ENCODE measurements at regions of chr5 and their contacts with region 1.

Region 1: DNA sequence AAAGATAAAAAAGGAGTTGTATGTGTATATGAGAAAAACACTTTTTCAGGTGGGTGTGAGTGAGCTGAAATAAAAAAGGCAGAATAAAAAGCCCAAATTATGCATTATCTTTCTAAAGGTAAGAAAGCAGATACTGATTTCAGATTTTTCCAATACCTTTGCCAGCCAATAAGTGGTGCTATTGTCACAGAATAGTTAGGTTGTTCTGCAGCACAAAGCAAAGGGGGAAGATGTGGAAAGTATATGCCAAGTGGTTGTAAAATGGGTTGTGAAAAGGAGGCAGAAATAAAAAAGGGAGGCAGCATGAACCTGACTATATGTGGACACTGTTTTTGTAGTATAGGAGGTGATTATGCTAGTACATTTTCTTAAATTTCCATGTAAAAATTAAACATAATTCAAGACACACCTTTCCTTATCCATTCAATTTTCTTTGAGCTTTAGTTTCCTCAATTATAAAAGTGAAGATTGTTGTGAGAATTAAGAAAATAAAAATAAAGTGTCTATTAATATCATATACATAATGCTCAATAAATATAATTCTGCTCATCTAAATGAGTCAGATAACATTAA is 106.7 kb downstream of the SMIM15 start:
- DNase-seq: peak; percentile 66
- H3K4me3 ChIP-seq: no peak overlapping the region
- H3K27ac ChIP-seq: no peak overlapping the region
- H3K4me1 ChIP-seq: peaks cover 13% of the 10 kb centered on the region
- H3K27me3 ChIP-seq: no peaks in the 10 kb centered on the region
- CTCF ChIP-seq: peak; percentile 50 to 54
- POLR2A ChIP-seq: no peak

Region 2: GRCh38 chr5:60660038-60660437 is 395.5 kb before region 1 on chr5:
- CTCF ChIA-PET with region 1: no interaction called
- POLR2A ChIA-PET with region 1: no interaction called
- dilution Hi-C with region 1: no loop called
- intact Hi-C with region 1: no loop called
- DNase-seq: no peak
- H3K4me3 ChIP-seq: no peak overlapping the region
- H3K27ac ChIP-seq: no peak overlapping the region
- H3K4me1 ChIP-seq: no peaks in the 10 kb centered on the region
- H3K27me3 ChIP-seq: no peaks in the 10 kb centered on the region
- CTCF ChIP-seq: no peak
- POLR2A ChIP-seq: no peak

Region 3: DNA sequence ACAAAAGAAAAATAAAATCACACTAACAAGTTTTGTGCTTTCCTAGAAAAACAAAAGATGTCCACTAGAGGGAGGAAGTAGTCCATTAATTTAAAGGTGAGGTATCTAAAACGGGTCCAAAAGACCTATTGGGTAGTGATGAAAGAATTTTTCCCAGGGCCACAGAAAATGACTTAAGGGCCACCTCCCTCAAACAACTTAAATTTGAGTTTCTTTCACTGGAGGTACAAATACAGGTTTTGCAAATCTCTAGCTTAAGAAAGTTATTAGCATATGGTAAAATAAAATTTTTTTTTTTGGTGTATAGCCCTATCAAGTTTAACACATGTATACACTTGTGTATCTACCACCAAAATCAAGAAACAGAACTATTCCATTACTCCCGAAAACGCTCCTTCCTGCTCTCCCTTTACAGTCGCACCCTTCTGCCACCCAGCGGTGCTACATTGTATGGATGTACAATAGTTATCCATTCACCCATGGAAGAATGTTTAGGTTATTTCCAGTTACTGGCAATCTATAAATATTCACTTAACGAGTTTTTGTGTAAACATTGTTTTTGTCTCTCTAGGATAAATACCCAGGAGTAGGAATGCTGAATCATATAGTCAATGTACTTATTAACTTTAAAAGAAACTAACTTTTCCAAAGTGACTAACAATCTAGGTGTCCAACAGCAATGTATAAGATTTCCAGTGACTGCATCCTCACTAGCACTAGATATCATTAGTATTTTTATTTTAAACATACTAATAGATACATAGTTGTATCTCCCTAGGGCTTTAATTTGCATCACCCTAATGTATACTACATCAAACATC is 377.5 kb before region 1 on chr5:
- CTCF ChIA-PET with region 1: no interaction called
- POLR2A ChIA-PET with region 1: no interaction called
- dilution Hi-C with region 1: no loop called
- intact Hi-C with region 1: loop called (anchors 2 kb)
- DNase-seq: peak; percentile 70
- H3K4me3 ChIP-seq: no peak overlapping the region
- H3K27ac ChIP-seq: no peak overlapping the region
- H3K4me1 ChIP-seq: no peaks in the 10 kb centered on the region
- H3K27me3 ChIP-seq: no peaks in the 10 kb centered on the region
- CTCF ChIP-seq: peak; percentile 22
- POLR2A ChIP-seq: no peak

Region 4: GRCh38 chr5:61280205-61280604 is 224.7 kb after region 1 on chr5:
- CTCF ChIA-PET with region 1: interaction called, 4 read pairs
- POLR2A ChIA-PET with region 1: no interaction called
- dilution Hi-C with region 1: no loop called
- intact Hi-C with region 1: loop called (anchors 2 kb)
- DNase-seq: peak; percentile 89
- H3K4me3 ChIP-seq: no peak overlapping the region
- H3K27ac ChIP-seq: no peak overlapping the region
- H3K4me1 ChIP-seq: peaks cover 39% of the 10 kb centered on the region
- H3K27me3 ChIP-seq: no peaks in the 10 kb centered on the region
- CTCF ChIP-seq: no peak
- POLR2A ChIP-seq: no peak

Region 5: GRCh38 chr5:61658592-61659008 is 603.1 kb after region 1 on chr5:
- CTCF ChIA-PET with region 1: interaction called, 79 read pairs
- POLR2A ChIA-PET with region 1: no interaction called
- dilution Hi-C with region 1: no loop called
- intact Hi-C with region 1: loop called (anchors 1 kb)
- DNase-seq: peak; percentile 74
- H3K4me3 ChIP-seq: no peak overlapping the region
- H3K27ac ChIP-seq: no peak overlapping the region
- H3K4me1 ChIP-seq: no peaks in the 10 kb centered on the region
- H3K27me3 ChIP-seq: peaks cover 5 to 11% of the 10 kb centered on the region in 2 experiments
- CTCF ChIP-seq: peak; percentile 90 to 93
- POLR2A ChIP-seq: no peak

Region 6: DNA sequence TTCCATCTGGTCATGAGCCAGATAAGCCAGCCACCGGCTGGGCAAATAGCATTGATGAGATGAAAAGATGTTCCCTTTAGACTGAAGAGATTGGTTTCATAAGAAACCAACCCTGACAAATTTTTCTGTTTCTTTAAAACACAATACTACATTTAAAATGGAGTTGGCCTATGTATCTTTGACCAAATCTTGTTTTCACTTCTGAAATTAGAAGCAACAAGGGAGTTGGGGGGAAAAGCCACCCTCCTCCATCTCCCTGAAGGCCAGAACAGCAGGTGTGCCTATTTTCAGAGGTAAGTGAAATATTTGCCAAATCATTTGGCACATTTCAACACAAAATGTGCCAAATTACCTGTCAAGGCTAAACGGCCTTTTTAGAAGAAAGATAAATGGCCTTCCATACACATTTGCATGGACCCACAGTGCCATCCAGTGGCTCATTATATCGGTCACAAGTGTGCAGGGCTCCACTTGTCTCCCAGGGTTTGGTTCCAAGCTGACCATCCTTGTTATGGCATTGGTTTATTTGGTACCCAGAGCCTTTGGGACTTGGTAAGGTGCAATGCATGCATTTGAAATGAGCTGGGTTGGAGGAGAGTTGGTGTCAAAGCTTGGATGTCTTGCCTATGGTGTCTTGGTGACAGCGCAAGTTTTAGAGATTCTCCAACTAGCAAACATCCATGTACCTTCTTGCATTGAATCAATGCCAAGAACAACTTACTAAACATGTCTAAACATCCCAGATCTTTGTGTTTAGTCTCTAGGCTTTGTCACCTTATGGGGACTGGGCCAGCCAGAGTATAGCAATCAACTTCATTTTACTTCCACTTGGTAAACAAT is 878.5 kb after region 1 on chr5:
- CTCF ChIA-PET with region 1: interaction called, 6 read pairs
- POLR2A ChIA-PET with region 1: no interaction called
- dilution Hi-C with region 1: no loop called
- intact Hi-C with region 1: loop called (anchors 2 kb)
- DNase-seq: peak; percentile 55
- H3K4me3 ChIP-seq: no peak overlapping the region
- H3K27ac ChIP-seq: no peak overlapping the region
- H3K4me1 ChIP-seq: no peaks in the 10 kb centered on the region
- H3K27me3 ChIP-seq: no peaks in the 10 kb centered on the region
- CTCF ChIP-seq: peak; percentile 29 to 52
- POLR2A ChIP-seq: no peak